ENCODE measurements at regions of chr15 and their contacts with region 1.

Region 1: GRCh38 chr15:30922480-30923311 is 19.0 kb downstream of the FAN1 start:
- DNase-seq: no peak
- H3K4me3 ChIP-seq: no peak overlapping the region
- H3K27ac ChIP-seq: no peak overlapping the region
- H3K4me1 ChIP-seq: no peaks in the 10 kb centered on the region
- H3K27me3 ChIP-seq: no peaks in the 10 kb centered on the region
- CTCF ChIP-seq: no peak
- POLR2A ChIP-seq: no peak

Region 2: GRCh38 chr15:30872341-30872748 is 50.4 kb before region 1 on chr15:
- intact Hi-C with region 1: loop called in 1 of 2 experiments (anchors 5 kb)
- DNase-seq: no peak
- H3K4me3 ChIP-seq: no peak overlapping the region
- H3K27ac ChIP-seq: no peak overlapping the region
- H3K4me1 ChIP-seq: no peaks in the 10 kb centered on the region
- H3K27me3 ChIP-seq: no peaks in the 10 kb centered on the region
- CTCF ChIP-seq: no peak
- POLR2A ChIP-seq: no peak

Measured in adrenal gland (tissue), 19 donors.